Heart right ventricle (tissue), 16 donors: ENCODE measurements at regions of chr4 and their contacts with region 1.

Region 1: GRCh38 chr4:184168406-184169019 is 49.2 kb downstream of the ENPP6 start:
- DNase-seq: peak; percentile 64 to 83
- ATAC-seq: peak; percentile 94 to 97 (median 96)
- H3K4me3 ChIP-seq: peak overlapping the region in 3 of 10 donors; percentile 18 to 19 (median 18)
- H3K27ac ChIP-seq: no peak overlapping the region
- H3K4me1 ChIP-seq: peaks cover 0 to 9% (median 0%) of the 10 kb centered on the region in 9 donors
- H3K27me3 ChIP-seq: peaks cover 0 to 37% (median 5%) of the 10 kb centered on the region in 7 donors
- CTCF ChIP-seq: peak; percentile 89 to 99 (median 97)

Region 2: GRCh38 chr4:183716302-183716701 is 452.2 kb before region 1 on chr4:
- intact Hi-C with region 1: loop called in 3 of 10 experiments (anchors 5 to 10 kb)
- DNase-seq: no peak
- ATAC-seq: no peak
- H3K4me3 ChIP-seq: no peak overlapping the region
- H3K27ac ChIP-seq: no peak overlapping the region
- H3K4me1 ChIP-seq: peaks cover 0 to 3% (median 0%) of the 10 kb centered on the region in 9 donors
- H3K27me3 ChIP-seq: no peaks in the 10 kb centered on the region
- CTCF ChIP-seq: no peak

Region 3: GRCh38 chr4:183840311-183840710 is 328.2 kb before region 1 on chr4:
- intact Hi-C with region 1: loop called (anchors 1 to 5 kb)
- DNase-seq: peak; percentile 76 to 84
- ATAC-seq: peak; percentile 59 to 90 (median 79)
- H3K4me3 ChIP-seq: no peak overlapping the region
- H3K27ac ChIP-seq: no peak overlapping the region
- H3K4me1 ChIP-seq: peaks cover 0 to 15% (median 7%) of the 10 kb centered on the region in 9 donors
- H3K27me3 ChIP-seq: no peaks in the 10 kb centered on the region
- CTCF ChIP-seq: peak; percentile 74 to 96 (median 90)

Region 4: DNA sequence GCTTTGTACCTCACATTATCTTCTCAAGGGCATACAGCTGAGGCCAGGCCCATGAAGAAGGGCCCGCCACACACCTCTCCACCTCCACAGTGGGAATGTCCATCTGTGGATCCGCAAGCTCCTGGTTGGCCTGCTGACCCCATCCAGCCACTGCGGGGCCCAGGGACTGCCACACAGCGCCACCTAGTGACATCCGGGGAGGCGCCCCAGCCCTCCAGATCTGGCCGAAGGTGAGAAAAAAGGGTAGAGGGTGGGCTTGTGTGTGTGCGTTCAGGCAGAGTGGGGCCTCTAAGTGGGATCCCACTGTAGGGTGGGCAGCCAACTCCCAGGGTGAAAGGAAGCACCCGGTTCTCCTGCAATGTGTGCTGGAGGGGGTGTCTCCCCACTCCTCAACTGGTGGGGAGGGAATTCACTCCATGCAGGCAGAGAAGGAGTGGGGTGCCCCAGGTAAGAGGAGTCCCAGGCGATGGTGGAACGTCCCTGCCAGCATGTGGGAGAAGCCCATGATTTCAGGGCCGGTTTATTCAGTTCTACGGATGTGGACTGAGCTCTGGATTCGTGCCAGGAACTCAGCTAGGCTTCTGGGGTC is 68.1 kb before region 1 on chr4:
- intact Hi-C with region 1: loop called in 6 of 10 experiments (anchors 5 to 10 kb)
- DNase-seq: peak; percentile 11 to 73
- ATAC-seq: peak; percentile 40 to 82 (median 67)
- H3K4me3 ChIP-seq: no peak overlapping the region
- H3K27ac ChIP-seq: no peak overlapping the region
- H3K4me1 ChIP-seq: peaks cover 0 to 44% (median 20%) of the 10 kb centered on the region in 9 donors
- H3K27me3 ChIP-seq: no peaks in the 10 kb centered on the region
- CTCF ChIP-seq: peak; percentile 62 to 78 (median 72)

Region 5: GRCh38 chr4:184250795-184251669 is 82.5 kb after region 1 on chr4:
- intact Hi-C with region 1: loop called in 1 of 10 experiments (anchors 10 kb)
- DNase-seq: no peak
- ATAC-seq: peak in 2 of 8 donors; percentile 22 to 55
- H3K4me3 ChIP-seq: no peak overlapping the region
- H3K27ac ChIP-seq: no peak overlapping the region
- H3K4me1 ChIP-seq: peaks cover 0 to 10% (median 0%) of the 10 kb centered on the region in 9 donors
- H3K27me3 ChIP-seq: no peaks in the 10 kb centered on the region
- CTCF ChIP-seq: peak; percentile 34 to 69 (median 62)

Region 6: GRCh38 chr4:184782731-184783373 is 614.3 kb after region 1 on chr4:
- intact Hi-C with region 1: no loop called
- DNase-seq: no peak
- ATAC-seq: peak in 3 of 8 donors; percentile 18 to 38 (median 35)
- H3K4me3 ChIP-seq: no peak overlapping the region
- H3K27ac ChIP-seq: peak overlapping the region in 1 of 10 donors; percentile 39
- H3K4me1 ChIP-seq: peaks cover 0 to 15% (median 0%) of the 10 kb centered on the region in 9 donors
- H3K27me3 ChIP-seq: no peaks in the 10 kb centered on the region
- CTCF ChIP-seq: no peak